ENCODE measurements at regions of chr13 and their contacts with region 1.

Region 1: GRCh38 chr13:21670883-21671619 is at the start of gene FGF9:
- DNase-seq: peak; percentile 77
- H3K4me3 Mint-ChIP-seq: peak within 1 kb of the TSS; percentile 82
- H3K27ac Mint-ChIP-seq: peak within 1 kb of the TSS; percentile 59
- H3K4me1 Mint-ChIP-seq: peaks cover 42% of the 10 kb centered on the region
- H3K27me3 Mint-ChIP-seq: peaks cover 62% of the 10 kb centered on the region
- total RNA-seq, gene FGF9: 0.23 and 0.47 TPM in 2 replicates

Region 2: DNA sequence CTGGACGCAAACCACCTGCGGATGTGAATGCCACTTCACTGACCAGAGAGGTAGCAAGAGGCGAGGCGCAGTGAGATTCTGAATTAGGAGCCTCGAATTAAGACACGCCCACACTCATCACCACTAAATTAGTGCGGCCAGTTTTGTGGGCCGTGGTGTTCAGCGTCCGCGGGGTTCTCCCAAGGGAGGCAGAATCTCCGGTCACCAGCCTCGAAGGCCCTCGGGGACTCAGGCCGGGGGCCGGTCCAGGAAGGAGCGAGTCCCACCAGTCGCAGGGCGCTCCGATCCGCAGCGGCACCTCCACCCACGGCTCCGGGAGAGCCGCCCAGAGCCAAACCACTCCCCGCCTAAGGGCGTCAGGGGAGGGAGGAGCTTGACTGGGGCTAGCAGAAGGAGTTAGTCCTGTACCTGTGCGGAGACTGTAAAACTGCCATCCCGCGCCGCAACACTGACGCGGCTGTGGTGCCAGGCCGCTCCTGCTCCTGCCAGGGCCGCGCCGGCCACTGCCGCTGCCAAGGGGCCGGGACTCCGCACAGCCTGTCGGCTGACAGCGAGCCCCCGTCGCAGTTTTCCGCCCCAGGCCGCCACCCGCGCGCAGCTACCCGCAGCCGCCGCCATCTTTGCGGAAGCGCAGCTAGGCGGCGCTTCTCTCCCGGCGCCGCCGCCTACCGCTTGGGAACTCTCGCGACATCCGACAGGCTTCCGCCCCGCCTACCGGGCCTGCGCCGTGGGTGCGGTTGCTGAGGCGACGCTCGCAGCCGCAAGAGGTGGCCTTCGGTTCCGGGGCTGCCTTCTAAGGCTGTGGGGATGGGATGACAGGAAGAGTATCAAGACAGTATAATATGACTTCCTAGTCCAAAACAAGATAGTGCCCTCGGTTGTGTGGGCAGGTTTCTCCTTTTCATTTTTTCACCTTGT is 67.3 kb before region 1 on chr13 and contains the start of gene MICU2:
- intact Hi-C with region 1: loop called (anchors 1 kb)
- DNase-seq: peak; percentile 94
- H3K4me3 Mint-ChIP-seq: peak within 1 kb of the TSS; percentile 85
- H3K27ac Mint-ChIP-seq: peak within 1 kb of the TSS; percentile 88
- H3K4me1 Mint-ChIP-seq: peaks cover 24% of the 10 kb centered on the region
- H3K27me3 Mint-ChIP-seq: peaks cover 24% of the 10 kb centered on the region
- total RNA-seq, gene MICU2: 32.5 and 33.8 TPM in 2 replicates

Region 3: GRCh38 chr13:21686751-21687391 is 15.8 kb after region 1 on chr13:
- intact Hi-C with region 1: loop called (anchors 2 kb)
- DNase-seq: no peak
- H3K4me3 Mint-ChIP-seq: no peak overlapping the region
- H3K27ac Mint-ChIP-seq: no peak overlapping the region
- H3K4me1 Mint-ChIP-seq: peaks cover 15% of the 10 kb centered on the region
- H3K27me3 Mint-ChIP-seq: peaks cover 16% of the 10 kb centered on the region

Region 4: GRCh38 chr13:22114630-22115311 is 443.7 kb after region 1 on chr13:
- intact Hi-C with region 1: loop called (anchors 10 kb)
- DNase-seq: peak; percentile 55
- H3K4me3 Mint-ChIP-seq: peak overlapping the region; percentile 16
- H3K27ac Mint-ChIP-seq: peak overlapping the region; percentile 87
- H3K4me1 Mint-ChIP-seq: peaks cover 62% of the 10 kb centered on the region
- H3K27me3 Mint-ChIP-seq: peaks cover 2% of the 10 kb centered on the region

Region 5: GRCh38 chr13:23159230-23159759 is 1488.2 kb after region 1 on chr13:
- intact Hi-C with region 1: loop called (anchors 5 kb)
- DNase-seq: no peak
- H3K4me3 Mint-ChIP-seq: no peak overlapping the region
- H3K27ac Mint-ChIP-seq: no peak overlapping the region
- H3K4me1 Mint-ChIP-seq: no peaks in the 10 kb centered on the region
- H3K27me3 Mint-ChIP-seq: peaks cover 24% of the 10 kb centered on the region